Activated T-helper 1 cell treated with anti-CD3 and anti-CD28 coated beads, Interleukin-12 subunit alpha, Interleukin-12 subunit beta, Interleukin-2, Interleukin-4 antibody, amounts not matched to agents 30 ng/mL and 10 ng/mL and 1 ng/mL, durations not matched to agents 14 hours and 24 hours and 36 hours (primary cell): ENCODE measurements at regions of chr5 and their contacts with region 1.

Region 1: GRCh38 chr5:134648425-134649162 is at the start of gene SEC24A:
- DNase-seq: peak; percentile 89
- H3K4me3 Mint-ChIP-seq: peak within 1 kb of the TSS; percentile 87
- H3K27ac Mint-ChIP-seq: peak within 1 kb of the TSS; percentile 94
- H3K4me1 Mint-ChIP-seq: peaks cover 32% of the 10 kb centered on the region
- H3K27me3 Mint-ChIP-seq: no peaks in the 10 kb centered on the region
- total RNA-seq, gene SEC24A: 26.5 and 27.2 TPM in 2 replicates

Region 2: GRCh38 chr5:133051580-133052332 is 1596.8 kb before region 1 on chr5 and contains the start of gene HSPA4:
- intact Hi-C with region 1: loop called (anchors 2 kb)
- DNase-seq: peak; percentile 96
- H3K4me3 Mint-ChIP-seq: peak within 1 kb of the TSS; percentile 96
- H3K27ac Mint-ChIP-seq: peak within 1 kb of the TSS; percentile 100
- H3K4me1 Mint-ChIP-seq: peaks cover 46% of the 10 kb centered on the region
- H3K27me3 Mint-ChIP-seq: peaks cover 2% of the 10 kb centered on the region
- total RNA-seq, gene HSPA4: 244 and 247 TPM in 2 replicates

Region 3: DNA sequence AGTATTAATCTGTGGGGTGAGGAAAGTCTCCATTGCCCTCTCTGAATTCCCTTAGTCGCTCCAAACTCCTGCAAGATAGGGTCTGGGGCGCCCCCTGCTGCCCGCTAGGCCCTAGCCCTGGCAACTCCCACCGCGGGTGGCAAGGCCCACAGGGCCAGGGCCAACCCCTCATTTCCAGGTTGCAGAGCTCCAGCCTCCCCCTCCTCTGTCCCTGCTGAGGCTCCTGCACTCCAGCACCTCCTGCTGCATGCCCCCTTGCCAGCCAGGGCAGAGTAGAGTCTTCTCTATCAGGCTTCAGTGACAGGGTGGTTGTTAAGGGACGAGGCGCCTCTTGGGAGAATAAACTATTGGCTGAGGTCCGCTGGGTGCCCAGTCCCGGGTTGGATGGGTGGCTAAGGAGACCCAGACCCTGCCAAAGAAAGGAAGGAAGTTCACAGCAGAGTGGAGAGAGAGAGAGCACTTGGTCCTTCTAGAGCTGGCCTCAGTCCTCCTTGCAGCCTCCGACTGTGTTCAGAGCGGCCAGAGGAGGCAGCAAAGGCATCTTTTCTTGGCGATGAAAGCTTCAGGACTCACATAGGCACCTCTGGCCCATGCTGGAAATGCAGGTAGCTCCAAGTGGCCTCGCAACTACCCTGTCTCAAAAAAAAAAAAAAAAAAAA is 61.6 kb before region 1 on chr5:
- intact Hi-C with region 1: loop called (anchors 1 kb)
- DNase-seq: peak; percentile 72
- H3K4me3 Mint-ChIP-seq: no peak overlapping the region
- H3K27ac Mint-ChIP-seq: peak overlapping the region; percentile 52
- H3K4me1 Mint-ChIP-seq: peaks cover 14% of the 10 kb centered on the region
- H3K27me3 Mint-ChIP-seq: no peaks in the 10 kb centered on the region

Region 4: GRCh38 chr5:134609232-134609851 is 39.3 kb before region 1 on chr5:
- intact Hi-C with region 1: loop called (anchors 1 kb)
- DNase-seq: no peak
- H3K4me3 Mint-ChIP-seq: peak overlapping the region; percentile 67
- H3K27ac Mint-ChIP-seq: peak overlapping the region; percentile 96
- H3K4me1 Mint-ChIP-seq: peaks cover 48% of the 10 kb centered on the region
- H3K27me3 Mint-ChIP-seq: no peaks in the 10 kb centered on the region

Region 5: DNA sequence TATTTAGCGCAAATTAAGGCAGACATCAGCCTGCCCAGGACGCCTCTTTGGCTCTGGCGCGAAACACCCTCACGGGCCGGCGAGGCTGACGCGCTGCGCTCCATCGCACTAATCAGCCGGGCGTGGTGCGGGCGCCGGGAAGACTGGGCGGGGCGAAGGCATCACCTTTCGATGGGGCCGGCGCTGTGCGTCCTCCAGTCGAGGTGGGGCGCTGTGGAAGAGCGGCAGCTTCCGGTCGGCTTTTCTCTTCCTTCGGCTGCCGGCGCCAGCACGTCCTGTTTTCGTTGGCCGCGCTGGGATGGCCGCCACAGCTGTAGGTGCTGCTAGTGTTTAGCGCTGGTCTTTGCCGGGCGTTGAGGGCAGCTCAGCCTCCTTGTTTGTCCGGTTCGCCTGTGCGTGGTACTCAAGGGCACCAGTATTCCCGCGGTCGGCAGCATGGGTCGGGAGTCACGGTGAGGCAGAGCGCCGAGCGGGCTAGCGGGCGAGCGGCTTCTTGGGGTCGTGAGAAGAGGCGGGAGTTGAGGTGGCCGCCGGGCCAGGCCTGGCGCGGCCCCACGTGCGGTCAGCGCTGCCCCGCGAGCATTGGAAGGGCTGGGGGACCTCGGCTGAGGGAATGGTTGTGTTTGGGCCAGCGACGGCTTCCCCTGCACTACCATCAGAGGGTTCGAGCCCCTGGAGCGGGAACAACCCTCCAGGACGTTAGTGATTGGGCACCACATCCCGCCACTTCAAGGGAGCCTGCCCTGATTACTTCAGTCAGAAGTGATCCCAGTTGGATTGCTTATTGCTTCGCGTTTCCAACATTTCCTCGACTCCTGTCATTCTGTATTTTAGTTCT is 110.1 kb after region 1 on chr5 and contains the start of gene DDX46:
- intact Hi-C with region 1: loop called (anchors 1 kb)
- DNase-seq: peak; percentile 94
- H3K4me3 Mint-ChIP-seq: peak within 1 kb of the TSS; percentile 100
- H3K27ac Mint-ChIP-seq: peak within 1 kb of the TSS; percentile 99
- H3K4me1 Mint-ChIP-seq: peaks cover 28% of the 10 kb centered on the region
- H3K27me3 Mint-ChIP-seq: no peaks in the 10 kb centered on the region
- total RNA-seq, gene DDX46: 78.3 and 84.4 TPM in 2 replicates